Heart right ventricle (tissue), 16 donors: ENCODE measurements at regions of chr17 and their contacts with region 1.

Region 1: GRCh38 chr17:7834962-7835813 is 1.2 kb downstream of the KDM6B start:
- DNase-seq: peak; percentile 97 to 99
- ATAC-seq: peak; percentile 79 to 83 (median 82)
- H3K4me3 ChIP-seq: peak overlapping the region; percentile 59 to 95 (median 80)
- H3K27ac ChIP-seq: peak overlapping the region; percentile 94 to 100 (median 98)
- H3K4me1 ChIP-seq: peaks cover 7 to 48% (median 42%) of the 10 kb centered on the region in 9 donors
- H3K27me3 ChIP-seq: peaks cover 0 to 3% (median 0%) of the 10 kb centered on the region in 7 donors
- CTCF ChIP-seq: peak; percentile 71 to 93 (median 81)

Region 2: GRCh38 chr17:7656958-7657609 is 178.1 kb before region 1 on chr17:
- intact Hi-C with region 1: no loop called
- DNase-seq: peak; percentile 73 to 87
- ATAC-seq: peak; percentile 55 to 92 (median 76)
- H3K4me3 ChIP-seq: no peak overlapping the region
- H3K27ac ChIP-seq: peak overlapping the region in 4 of 10 donors; percentile 1 to 35 (median 28)
- H3K4me1 ChIP-seq: peaks cover 0 to 16% (median 10%) of the 10 kb centered on the region in 9 donors
- H3K27me3 ChIP-seq: peaks cover 0 to 15% (median 0%) of the 10 kb centered on the region in 7 donors
- CTCF ChIP-seq: no peak

Region 3: DNA sequence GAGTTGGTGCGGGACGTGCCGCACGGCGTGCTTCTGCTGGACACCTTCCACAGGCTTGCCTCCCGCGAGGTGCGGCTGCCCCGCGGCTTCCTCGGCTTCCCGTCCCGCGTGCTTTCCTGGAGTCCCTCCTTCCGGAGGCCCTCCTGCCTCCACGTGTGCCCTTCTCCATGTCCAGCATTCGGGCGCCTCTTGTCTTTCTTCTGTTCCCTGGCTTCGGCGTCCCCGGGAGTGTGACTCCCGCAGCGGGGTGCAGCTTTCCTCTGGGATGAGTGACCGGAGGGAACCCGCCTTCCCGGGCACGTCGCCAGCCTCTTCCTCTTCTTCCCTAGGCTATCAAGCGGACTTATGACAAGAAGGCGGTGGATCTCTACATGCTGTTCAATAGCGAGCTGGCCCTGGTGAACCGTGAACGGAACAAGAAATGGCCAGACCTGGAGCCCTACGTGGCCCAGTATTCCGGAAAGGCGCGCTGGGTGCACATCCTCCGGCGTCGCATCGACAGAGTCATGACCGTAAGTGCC is 94.6 kb before region 1 on chr17:
- intact Hi-C with region 1: loop called in 2 of 10 experiments (anchors 2 to 10 kb)
- DNase-seq: peak in 1 of 2 donors; percentile 27
- ATAC-seq: peak in 2 of 8 donors; percentile 13 to 43
- H3K4me3 ChIP-seq: peak overlapping the region in 6 of 10 donors; percentile 7 to 41 (median 22)
- H3K27ac ChIP-seq: no peak overlapping the region
- H3K4me1 ChIP-seq: peaks cover 0 to 15% (median 0%) of the 10 kb centered on the region in 9 donors
- H3K27me3 ChIP-seq: peaks cover 0 to 31% (median 14%) of the 10 kb centered on the region in 7 donors
- CTCF ChIP-seq: no peak

Region 4: DNA sequence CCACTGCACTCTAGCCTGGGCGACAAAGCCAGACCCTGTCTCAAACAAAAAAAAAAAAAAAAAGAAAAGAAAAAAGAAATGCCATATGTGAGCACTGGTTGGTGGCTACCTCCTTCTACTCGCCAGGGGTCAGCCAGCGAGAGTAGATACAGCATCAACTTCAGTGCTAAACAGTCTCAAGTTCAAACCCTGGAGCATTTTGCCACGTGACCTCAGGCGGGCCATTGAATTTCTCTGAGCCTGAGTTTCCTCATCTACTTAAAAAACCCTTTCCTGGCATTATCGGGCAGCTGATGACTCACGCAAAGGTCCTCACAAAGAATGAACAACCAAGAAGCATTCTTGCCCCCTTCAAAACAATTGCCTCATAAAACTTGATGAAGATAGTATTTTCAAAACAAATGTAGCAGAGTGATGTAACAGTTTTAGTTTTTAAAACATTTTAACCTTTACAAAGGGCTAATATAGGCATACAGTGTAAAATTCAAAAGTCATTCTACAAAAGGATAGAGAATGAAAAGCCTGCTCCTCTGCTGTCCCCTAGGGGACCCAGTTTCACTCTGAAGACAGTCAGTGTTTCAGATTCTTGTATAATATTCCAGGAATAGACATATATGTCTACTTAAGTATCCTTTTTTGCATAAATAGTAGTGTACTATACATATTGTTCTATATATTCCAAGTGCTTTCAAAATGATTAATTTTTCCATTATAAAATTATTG is 89.3 kb before region 1 on chr17:
- intact Hi-C with region 1: loop called in 2 of 10 experiments (anchors 2 to 10 kb)
- DNase-seq: no peak
- ATAC-seq: peak in 1 of 8 donors; percentile 37
- H3K4me3 ChIP-seq: no peak overlapping the region
- H3K27ac ChIP-seq: no peak overlapping the region
- H3K4me1 ChIP-seq: peaks cover 0 to 18% (median 8%) of the 10 kb centered on the region in 9 donors
- H3K27me3 ChIP-seq: peaks cover 0 to 18% (median 9%) of the 10 kb centered on the region in 7 donors
- CTCF ChIP-seq: peak in 1 of 9 donors; percentile 8

Region 5: DNA sequence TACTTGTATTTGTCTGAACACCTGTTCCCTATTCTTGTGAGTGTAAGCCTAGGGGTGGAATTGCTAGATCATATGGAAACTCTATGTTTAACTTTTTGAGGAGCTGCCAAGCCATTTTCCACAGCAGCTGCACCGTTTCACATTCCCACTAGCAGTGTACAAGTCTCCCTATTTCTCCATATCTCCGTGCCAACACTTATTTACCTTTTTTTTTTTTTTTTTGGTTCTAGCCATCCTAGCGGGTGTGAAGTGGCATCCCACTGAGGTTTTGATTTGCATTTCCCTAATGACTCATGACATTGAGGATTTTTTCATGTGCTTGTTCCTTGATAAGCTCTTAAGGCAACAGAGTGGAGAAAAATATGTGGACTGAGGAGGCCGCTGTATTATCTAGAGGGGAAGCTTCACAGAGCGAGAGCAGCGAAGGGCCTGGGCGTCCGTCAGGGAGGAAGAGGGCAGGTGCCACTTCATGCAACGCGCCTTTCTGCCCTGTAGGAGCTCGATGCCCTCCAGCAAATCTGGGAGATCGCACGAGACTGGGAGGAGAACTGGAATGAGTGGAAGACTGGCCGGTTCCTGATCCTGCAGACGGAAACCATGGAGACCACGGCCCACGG is 67.7 kb before region 1 on chr17:
- intact Hi-C with region 1: no loop called
- DNase-seq: no peak
- ATAC-seq: no peak
- H3K4me3 ChIP-seq: no peak overlapping the region
- H3K27ac ChIP-seq: no peak overlapping the region
- H3K4me1 ChIP-seq: no peaks in the 10 kb centered on the region
- H3K27me3 ChIP-seq: peaks cover 0 to 15% (median 9%) of the 10 kb centered on the region in 7 donors
- CTCF ChIP-seq: no peak

Region 6: GRCh38 chr17:7851438-7852256 is 16.5 kb after region 1 on chr17:
- intact Hi-C with region 1: loop called in 5 of 10 experiments (anchors 2 kb)
- DNase-seq: peak; percentile 91
- ATAC-seq: peak; percentile 62 to 75 (median 70)
- H3K4me3 ChIP-seq: peak overlapping the region in 5 of 10 donors; percentile 5 to 42 (median 19)
- H3K27ac ChIP-seq: peak overlapping the region in 5 of 10 donors; percentile 4 to 49 (median 17)
- H3K4me1 ChIP-seq: peaks cover 3 to 49% (median 30%) of the 10 kb centered on the region in 9 donors
- H3K27me3 ChIP-seq: no peaks in the 10 kb centered on the region
- CTCF ChIP-seq: peak; percentile 96 to 99 (median 98)

Region 7: GRCh38 chr17:7897090-7897489 is 61.9 kb after region 1 on chr17:
- intact Hi-C with region 1: no loop called
- DNase-seq: no peak
- ATAC-seq: no peak
- H3K4me3 ChIP-seq: no peak overlapping the region
- H3K27ac ChIP-seq: no peak overlapping the region
- H3K4me1 ChIP-seq: peaks cover 0 to 9% (median 0%) of the 10 kb centered on the region in 9 donors
- H3K27me3 ChIP-seq: no peaks in the 10 kb centered on the region
- CTCF ChIP-seq: no peak

Region 8: DNA sequence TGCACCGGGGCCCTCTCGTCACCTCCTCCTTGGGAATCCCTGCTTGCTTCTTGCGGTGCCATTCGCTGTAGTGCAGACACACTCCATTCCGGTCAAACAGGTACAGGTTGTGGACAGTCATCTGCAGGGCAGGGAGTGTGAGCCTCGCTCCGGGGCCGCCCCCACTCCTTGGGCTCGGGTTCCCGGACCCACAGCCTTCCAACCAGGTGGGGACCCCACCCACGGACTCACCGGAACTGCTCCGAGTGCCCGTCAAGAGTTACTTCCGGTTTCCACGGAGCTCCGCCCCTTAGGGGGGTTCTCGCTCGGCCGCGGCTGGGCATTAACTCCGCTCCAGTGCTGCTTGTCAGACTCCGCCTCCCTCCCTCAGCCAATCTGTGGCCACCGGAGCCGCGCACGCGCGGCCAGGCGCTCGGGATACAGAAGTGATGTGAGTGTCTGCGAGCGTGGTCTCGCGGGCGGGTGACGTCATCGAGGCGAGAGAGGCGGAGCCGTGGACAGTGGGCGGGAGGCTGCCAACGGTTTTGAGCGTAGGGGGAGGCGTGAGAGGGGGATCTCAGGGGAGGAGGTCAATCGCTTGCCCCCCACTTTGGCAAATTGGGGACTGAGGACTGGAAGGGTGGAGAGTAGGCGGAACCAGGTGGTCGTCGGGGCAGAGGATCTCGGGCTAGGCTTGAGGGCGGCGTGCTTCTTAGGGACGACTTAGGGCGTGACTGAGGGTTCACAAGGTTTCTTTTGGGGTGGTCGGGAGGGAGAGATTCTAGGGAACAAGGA is 96.7 kb after region 1 on chr17 and contains the starts of genes CNTROB and TRAPPC1:
- intact Hi-C with region 1: no loop called
- DNase-seq: peak; percentile 99 to 100
- ATAC-seq: peak; percentile 98 to 99 (median 99)
- H3K4me3 ChIP-seq: peak within 1 kb of the TSS; percentile 46 to 94 (median 77)
- H3K27ac ChIP-seq: peak within 1 kb of the TSS in 9 of 10 donors; percentile 49 to 92 (median 79)
- H3K4me1 ChIP-seq: peaks cover 2 to 36% (median 22%) of the 10 kb centered on the region in 9 donors
- H3K27me3 ChIP-seq: no peaks in the 10 kb centered on the region
- CTCF ChIP-seq: no peak
- total RNA-seq, gene CNTROB: 7.8 to 14.4 (median 10.7) TPM
- total RNA-seq, gene TRAPPC1: 104 to 166 (median 121) TPM

Region 9: GRCh38 chr17:8156246-8156992 is 321.2 kb after region 1 on chr17:
- intact Hi-C with region 1: loop called in 3 of 10 experiments (anchors 5 to 10 kb)
- DNase-seq: peak; percentile 100
- ATAC-seq: peak; percentile 65 to 75 (median 68)
- H3K4me3 ChIP-seq: peak overlapping the region; percentile 66 to 91 (median 81)
- H3K27ac ChIP-seq: peak overlapping the region; percentile 97 to 100 (median 100)
- H3K4me1 ChIP-seq: peaks cover 19 to 91% (median 51%) of the 10 kb centered on the region in 9 donors
- H3K27me3 ChIP-seq: no peaks in the 10 kb centered on the region
- CTCF ChIP-seq: peak in 4 of 9 donors; percentile 12 to 42 (median 28)